ENCODE measurements at regions of chr9 and their contacts with region 1.

Region 1: GRCh38 chr9:127916665-127917613 is at the start of gene ST6GALNAC4:
- DNase-seq: peak; percentile 96
- ATAC-seq: peak; percentile 94
- H3K4me3 Mint-ChIP-seq: peak within 1 kb of the TSS; percentile 81
- H3K27ac Mint-ChIP-seq: peak within 1 kb of the TSS; percentile 91
- H3K4me1 Mint-ChIP-seq: peaks cover 75% of the 10 kb centered on the region
- H3K27me3 Mint-ChIP-seq: peaks cover under 1% of the 10 kb centered on the region
- total RNA-seq, gene ST6GALNAC4: 64.7 to 71.4 TPM

Region 2: DNA sequence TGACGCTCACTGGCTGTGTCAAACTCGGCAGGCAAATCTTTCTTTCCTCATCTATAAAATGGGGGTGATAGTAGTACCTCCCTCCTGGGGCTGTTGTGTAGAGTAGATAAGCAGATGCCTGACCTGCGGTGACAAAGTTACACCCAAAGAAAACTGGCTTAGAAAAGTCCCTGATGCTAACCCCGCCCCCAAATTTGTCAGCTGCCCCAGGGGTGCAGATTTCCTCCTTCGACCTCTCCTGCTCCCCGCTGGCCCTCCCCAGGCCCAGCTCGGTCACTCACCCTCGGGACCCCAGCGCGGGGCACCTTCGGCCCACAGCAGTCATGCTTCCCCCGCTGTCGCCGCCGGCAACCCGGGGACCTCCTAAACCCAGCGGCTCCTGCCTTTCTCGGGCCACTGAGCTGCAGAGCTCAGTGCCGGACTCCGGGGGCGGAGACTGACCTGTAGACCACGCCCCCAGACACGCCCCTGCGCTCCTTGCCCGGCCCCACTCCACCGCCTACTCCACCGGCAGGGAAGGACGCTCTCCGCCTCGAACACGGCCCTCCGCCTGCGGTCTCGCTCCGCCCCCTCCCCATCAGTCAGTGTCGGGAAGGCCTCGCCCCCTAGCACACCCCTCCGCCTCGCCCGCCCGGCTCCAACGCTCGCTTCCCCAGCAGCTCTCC is 145.9 kb before region 1 on chr9:
- CTCF ChIA-PET with region 1: interaction called, 23 read pairs
- DNase-seq: peak; percentile 98
- ATAC-seq: peak; percentile 91
- H3K4me3 Mint-ChIP-seq: peak overlapping the region; percentile 85
- H3K27ac Mint-ChIP-seq: peak overlapping the region; percentile 88
- H3K4me1 Mint-ChIP-seq: peaks cover 79% of the 10 kb centered on the region
- H3K27me3 Mint-ChIP-seq: no peaks in the 10 kb centered on the region

Region 3: DNA sequence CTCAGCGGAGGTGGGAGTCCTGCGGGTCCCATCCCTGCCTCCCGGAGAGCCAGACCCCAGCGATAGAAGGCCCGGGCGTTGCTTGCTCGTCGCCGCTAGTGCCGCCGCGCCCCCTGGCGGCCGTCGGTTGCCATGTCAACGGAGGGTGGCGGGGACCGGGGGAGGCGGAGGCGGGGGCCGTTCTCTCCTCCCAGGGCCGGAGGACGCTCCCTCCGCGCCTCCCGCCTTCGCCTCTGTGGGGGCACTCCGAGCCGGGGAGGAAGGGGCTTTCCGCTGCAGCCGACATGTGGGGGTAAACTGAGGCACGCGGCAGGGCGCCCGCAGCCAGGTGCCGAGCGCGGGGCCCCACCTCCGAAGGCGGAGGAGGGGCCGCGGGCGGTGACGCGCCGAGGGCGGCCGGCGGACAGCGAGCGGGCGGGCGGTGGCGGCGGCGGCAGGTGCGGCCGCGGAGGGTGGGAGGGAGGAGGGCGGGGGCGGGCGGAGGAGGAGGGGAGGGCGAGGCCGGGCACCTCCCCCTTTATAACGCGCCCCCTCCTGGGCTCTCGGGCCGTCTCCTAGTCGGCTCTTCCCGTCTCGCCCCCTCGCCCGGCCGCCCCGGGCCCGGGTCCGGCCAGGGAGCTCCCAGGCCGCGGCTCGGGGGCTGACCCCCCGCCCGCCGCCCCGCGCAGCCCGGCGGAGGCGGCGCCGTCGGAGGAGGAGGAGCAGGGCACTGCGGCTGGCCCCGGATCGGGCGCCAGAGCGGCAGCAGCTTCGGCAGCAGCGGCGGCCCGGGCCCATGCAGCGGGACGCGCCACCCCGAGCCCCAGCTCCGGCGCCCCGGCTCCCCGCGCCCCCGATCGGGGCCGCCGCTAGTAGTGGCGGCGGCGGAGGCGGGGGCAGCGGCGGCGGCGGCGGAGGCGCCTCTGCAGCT is 131.7 kb before region 1 on chr9:
- CTCF ChIA-PET with region 1: interaction called, 19 read pairs
- DNase-seq: peak; percentile 94
- ATAC-seq: peak; percentile 46
- H3K4me3 Mint-ChIP-seq: peak overlapping the region; percentile 95
- H3K27ac Mint-ChIP-seq: peak overlapping the region; percentile 89
- H3K4me1 Mint-ChIP-seq: peaks cover 78% of the 10 kb centered on the region
- H3K27me3 Mint-ChIP-seq: no peaks in the 10 kb centered on the region

Region 4: GRCh38 chr9:127838375-127839078 is 78.4 kb before region 1 on chr9:
- CTCF ChIA-PET with region 1: no interaction called
- DNase-seq: no peak
- ATAC-seq: no peak
- H3K4me3 Mint-ChIP-seq: no peak overlapping the region
- H3K27ac Mint-ChIP-seq: no peak overlapping the region
- H3K4me1 Mint-ChIP-seq: peaks cover 5% of the 10 kb centered on the region
- H3K27me3 Mint-ChIP-seq: no peaks in the 10 kb centered on the region

Region 5: GRCh38 chr9:127877566-127877998 is 39.4 kb before region 1 on chr9 and contains the start of gene AK1:
- CTCF ChIA-PET with region 1: interaction called, 42 read pairs
- DNase-seq: no peak
- ATAC-seq: no peak
- H3K4me3 Mint-ChIP-seq: no peak within 1 kb of the TSS
- H3K27ac Mint-ChIP-seq: no peak within 1 kb of the TSS
- H3K4me1 Mint-ChIP-seq: peaks cover 4% of the 10 kb centered on the region
- H3K27me3 Mint-ChIP-seq: peaks cover 3% of the 10 kb centered on the region
- total RNA-seq, gene AK1: 33.6 to 34.3 TPM

Region 6: GRCh38 chr9:127903557-127904475 is 13.1 kb before region 1 on chr9:
- CTCF ChIA-PET with region 1: interaction called, 34 read pairs
- DNase-seq: peak; percentile 97
- ATAC-seq: peak; percentile 48
- H3K4me3 Mint-ChIP-seq: peak overlapping the region; percentile 83
- H3K27ac Mint-ChIP-seq: peak overlapping the region; percentile 100
- H3K4me1 Mint-ChIP-seq: peaks cover 54% of the 10 kb centered on the region
- H3K27me3 Mint-ChIP-seq: no peaks in the 10 kb centered on the region

Region 7: DNA sequence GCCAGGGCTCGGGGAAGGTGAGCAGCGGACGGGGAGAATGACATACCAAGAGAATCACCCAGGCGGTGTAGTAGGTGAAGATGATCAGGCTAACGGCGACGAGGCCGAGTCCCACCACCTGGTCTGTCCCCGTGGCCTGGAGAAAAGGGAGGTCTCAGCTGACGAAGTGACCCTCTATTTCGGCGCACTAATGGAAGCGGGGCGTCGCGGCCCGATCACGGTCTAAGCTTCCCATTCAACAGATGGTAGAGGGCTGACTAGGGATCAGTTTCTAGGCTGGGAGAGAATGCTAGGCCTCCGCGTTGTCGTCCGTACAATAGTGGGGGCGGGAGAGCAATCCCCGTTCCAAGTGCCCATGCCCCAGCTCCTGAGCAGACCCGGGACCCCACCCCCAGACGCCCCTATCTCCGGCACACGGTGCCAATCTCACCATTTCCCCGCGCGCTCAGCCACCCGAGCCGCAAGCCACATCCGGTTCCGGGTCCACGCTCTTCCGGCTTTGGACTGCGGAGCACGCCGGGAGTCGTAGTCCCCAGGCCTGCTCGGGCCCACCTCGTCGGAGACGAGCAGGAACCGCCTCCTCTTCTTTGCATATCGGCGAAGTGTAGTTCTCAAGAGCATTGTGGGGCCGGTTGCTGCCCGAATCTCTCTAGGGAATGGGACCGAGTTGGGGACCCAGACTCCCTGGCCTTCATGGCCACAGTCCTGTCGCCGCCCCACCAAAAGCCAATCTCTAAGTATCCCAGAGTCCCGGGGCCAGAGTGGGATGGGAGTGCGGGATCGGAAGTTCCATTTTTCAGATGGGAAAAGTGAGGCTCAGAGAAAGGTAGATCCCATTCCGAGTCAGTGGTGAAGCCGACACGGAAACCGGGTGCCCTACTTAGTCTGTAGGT is 20.7 kb after region 1 on chr9 and contains the start of gene DPM2:
- CTCF ChIA-PET with region 1: interaction called, 13 read pairs
- DNase-seq: peak; percentile 93
- ATAC-seq: peak; percentile 93
- H3K4me3 Mint-ChIP-seq: peak within 1 kb of the TSS; percentile 87
- H3K27ac Mint-ChIP-seq: peak within 1 kb of the TSS; percentile 88
- H3K4me1 Mint-ChIP-seq: peaks cover 33% of the 10 kb centered on the region
- H3K27me3 Mint-ChIP-seq: peaks cover 2% of the 10 kb centered on the region
- total RNA-seq, gene DPM2: 51.4 to 53.5 TPM

Region 8: GRCh38 chr9:128117613-128118471 is 200.9 kb after region 1 on chr9:
- CTCF ChIA-PET with region 1: interaction called, 11 read pairs
- DNase-seq: peak; percentile 96
- ATAC-seq: peak; percentile 88
- H3K4me3 Mint-ChIP-seq: no peak overlapping the region
- H3K27ac Mint-ChIP-seq: no peak overlapping the region
- H3K4me1 Mint-ChIP-seq: peaks cover 5% of the 10 kb centered on the region
- H3K27me3 Mint-ChIP-seq: no peaks in the 10 kb centered on the region

Measured in activated CD8-positive, alpha-beta memory T cell treated with anti-CD3 and anti-CD28 coated beads, Interleukin-2, amount 10 ng/mL, durations not matched to agents 7 days and 5 days (primary cell).